IMR-90 (cell line): ENCODE measurements at regions of chr1 and their contacts with region 1.

Region 1: DNA sequence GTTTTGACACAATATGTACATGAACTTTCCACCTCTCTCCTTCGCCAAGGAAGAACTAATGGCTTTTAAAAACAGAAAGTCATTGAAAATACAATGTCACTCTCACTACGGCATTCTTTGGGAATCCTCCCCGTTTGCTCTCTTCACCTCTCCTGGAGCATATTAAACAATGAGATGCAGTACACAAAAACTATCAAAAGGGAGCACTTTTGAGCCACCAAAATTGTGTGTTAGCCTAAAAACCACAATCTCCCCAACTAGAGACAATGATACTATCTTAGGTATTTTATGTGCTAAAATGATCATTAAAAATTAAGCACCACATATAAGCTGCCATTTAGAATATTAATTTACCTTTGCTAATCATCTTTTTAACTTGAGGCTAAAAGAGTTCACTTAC is 425.5 kb downstream of the KCTD3 start:
- DNase-seq: peak; percentile 43
- ATAC-seq: peak; percentile 85
- H3K4me3 ChIP-seq: no peak overlapping the region
- H3K27ac ChIP-seq: no peak overlapping the region
- H3K4me1 ChIP-seq: peaks cover 2% of the 10 kb centered on the region
- H3K27me3 ChIP-seq: no peaks in the 10 kb centered on the region
- CTCF ChIP-seq: peak; percentile 71
- POLR2A ChIP-seq: no peak
- RAD21 ChIP-seq: peak; percentile 76

Region 2: GRCh38 chr1:215824245-215824644 is 168.4 kb before region 1 on chr1:
- CTCF ChIA-PET with region 1: no interaction called
- POLR2A ChIA-PET with region 1: no interaction called
- dilution Hi-C with region 1: no loop called
- in situ Hi-C with region 1: no loop called
- intact Hi-C with region 1: loop called (anchors 5 kb)
- DNase-seq: peak; percentile 45
- ATAC-seq: peak; percentile 77
- H3K4me3 ChIP-seq: no peak overlapping the region
- H3K27ac ChIP-seq: no peak overlapping the region
- H3K4me1 ChIP-seq: no peaks in the 10 kb centered on the region
- H3K27me3 ChIP-seq: no peaks in the 10 kb centered on the region
- CTCF ChIP-seq: peak; percentile 83
- POLR2A ChIP-seq: no peak
- RAD21 ChIP-seq: peak; percentile 93

Region 3: GRCh38 chr1:215888159-215888558 is 104.5 kb before region 1 on chr1:
- CTCF ChIA-PET with region 1: no interaction called
- POLR2A ChIA-PET with region 1: no interaction called
- dilution Hi-C with region 1: no loop called
- in situ Hi-C with region 1: no loop called
- intact Hi-C with region 1: no loop called
- DNase-seq: no peak
- ATAC-seq: no peak
- H3K4me3 ChIP-seq: no peak overlapping the region
- H3K27ac ChIP-seq: no peak overlapping the region
- H3K4me1 ChIP-seq: no peaks in the 10 kb centered on the region
- H3K27me3 ChIP-seq: no peaks in the 10 kb centered on the region
- CTCF ChIP-seq: no peak
- POLR2A ChIP-seq: no peak
- RAD21 ChIP-seq: no peak

Region 4: GRCh38 chr1:216221260-216221700 is 228.7 kb after region 1 on chr1:
- CTCF ChIA-PET with region 1: interaction called, 10 read pairs
- POLR2A ChIA-PET with region 1: no interaction called
- dilution Hi-C with region 1: no loop called
- in situ Hi-C with region 1: no loop called
- intact Hi-C with region 1: loop called (anchors 2 kb)
- DNase-seq: peak; percentile 86
- ATAC-seq: peak; percentile 94
- H3K4me3 ChIP-seq: peak overlapping the region; percentile 76
- H3K27ac ChIP-seq: peak overlapping the region; percentile 82
- H3K4me1 ChIP-seq: peaks cover 4% of the 10 kb centered on the region; the same call in 1 of the 2 replicates
- H3K27me3 ChIP-seq: no peaks in the 10 kb centered on the region
- CTCF ChIP-seq: peak; percentile 83
- POLR2A ChIP-seq: no peak
- RAD21 ChIP-seq: peak; percentile 70

Region 5: DNA sequence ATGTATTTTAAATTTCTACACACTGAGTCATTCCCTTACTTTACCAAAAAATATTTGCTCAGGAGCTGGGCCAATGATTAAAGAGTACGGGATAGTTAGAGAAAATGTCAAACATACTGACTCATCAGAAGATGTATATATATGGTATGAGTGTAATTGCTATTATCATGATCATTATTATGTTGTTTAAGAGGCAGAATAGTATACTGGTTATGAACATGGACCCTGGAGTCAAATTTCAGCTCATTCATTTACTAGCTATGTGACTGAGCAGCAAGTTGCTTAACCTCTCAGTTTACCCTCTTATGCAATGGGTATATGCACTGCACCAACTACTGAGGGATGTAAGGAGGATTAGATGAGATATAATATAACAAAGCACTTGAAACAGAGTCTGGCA is 471.9 kb after region 1 on chr1:
- CTCF ChIA-PET with region 1: no interaction called
- POLR2A ChIA-PET with region 1: no interaction called
- dilution Hi-C with region 1: no loop called
- in situ Hi-C with region 1: no loop called
- intact Hi-C with region 1: loop called (anchors 5 kb)
- DNase-seq: peak; percentile 98
- ATAC-seq: peak; percentile 92
- H3K4me3 ChIP-seq: no peak overlapping the region
- H3K27ac ChIP-seq: no peak overlapping the region
- H3K4me1 ChIP-seq: peaks cover 14% of the 10 kb centered on the region
- H3K27me3 ChIP-seq: no peaks in the 10 kb centered on the region
- CTCF ChIP-seq: no peak
- POLR2A ChIP-seq: no peak
- RAD21 ChIP-seq: no peak

Region 6: GRCh38 chr1:216600730-216601609 is 608.4 kb after region 1 on chr1:
- CTCF ChIA-PET with region 1: no interaction called
- POLR2A ChIA-PET with region 1: no interaction called
- dilution Hi-C with region 1: no loop called
- in situ Hi-C with region 1: no loop called
- intact Hi-C with region 1: loop called (anchors 5 kb)
- DNase-seq: peak; percentile 78
- ATAC-seq: peak; percentile 94
- H3K4me3 ChIP-seq: peak overlapping the region; percentile 65
- H3K27ac ChIP-seq: peak overlapping the region; percentile 80
- H3K4me1 ChIP-seq: peaks cover 5% of the 10 kb centered on the region
- H3K27me3 ChIP-seq: no peaks in the 10 kb centered on the region
- CTCF ChIP-seq: peak; percentile 61
- POLR2A ChIP-seq: peak; percentile 53; the same call in 1 of the 2 replicates
- RAD21 ChIP-seq: peak; percentile 49

Region 7: DNA sequence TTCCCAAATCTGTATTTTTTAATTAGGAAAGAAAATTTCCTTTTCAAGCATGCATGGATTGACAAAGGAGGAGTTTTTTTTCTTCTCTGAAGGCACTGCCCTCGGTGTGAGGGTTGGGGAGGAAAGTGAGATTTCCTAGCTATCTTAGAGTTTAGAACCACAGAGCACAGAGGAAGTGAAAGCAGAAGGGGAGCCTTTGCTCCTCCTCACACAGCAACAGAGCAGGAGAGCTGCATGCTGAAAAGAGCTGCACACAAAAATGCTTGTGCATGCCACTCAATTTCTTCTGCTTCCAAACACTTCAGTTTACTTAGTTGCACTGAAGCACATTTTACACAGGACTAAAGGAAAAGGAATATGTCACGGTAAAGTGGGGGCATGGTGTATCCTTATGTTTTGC is 1330.2 kb after region 1 on chr1:
- CTCF ChIA-PET with region 1: no interaction called
- POLR2A ChIA-PET with region 1: no interaction called
- dilution Hi-C with region 1: no loop called
- in situ Hi-C with region 1: loop called (anchors 25 kb)
- intact Hi-C with region 1: no loop called
- DNase-seq: no peak
- ATAC-seq: no peak
- H3K4me3 ChIP-seq: no peak overlapping the region
- H3K27ac ChIP-seq: no peak overlapping the region
- H3K4me1 ChIP-seq: no peaks in the 10 kb centered on the region
- H3K27me3 ChIP-seq: peaks cover 1% of the 10 kb centered on the region; the same call in 1 of the 2 replicates
- CTCF ChIP-seq: no peak
- POLR2A ChIP-seq: no peak
- RAD21 ChIP-seq: no peak